Aorta (tissue), 5 donors: ENCODE measurements at regions of chr4 and their contacts with region 1.

Region 1: DNA sequence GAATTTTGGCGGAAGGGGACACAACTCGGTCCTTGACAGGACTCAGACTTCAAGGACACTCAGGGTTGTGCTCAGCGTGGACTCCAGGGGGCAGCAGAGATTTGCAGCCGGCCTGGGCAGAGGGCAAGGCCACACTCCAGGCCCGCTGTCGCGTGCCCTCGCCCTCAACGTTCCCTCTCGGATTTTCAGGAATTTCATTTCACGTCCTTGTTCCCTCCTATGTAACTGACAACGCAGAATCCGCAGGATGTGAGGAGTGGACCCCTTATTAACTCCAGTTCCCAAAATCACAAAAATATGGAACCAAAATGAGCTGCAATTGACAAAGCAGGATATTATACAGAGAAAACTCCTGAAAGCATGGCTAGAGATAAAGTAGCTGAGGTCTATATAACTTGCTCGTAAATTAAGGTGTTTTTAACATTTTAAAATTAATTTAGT is 21.0 kb upstream of the DCTD start:
- DNase-seq: peak; percentile 75 to 89
- ATAC-seq: peak; percentile 95
- H3K4me3 ChIP-seq: no peak overlapping the region
- H3K27ac ChIP-seq: no peak overlapping the region
- H3K4me1 ChIP-seq: no peaks in the 10 kb centered on the region
- H3K27me3 ChIP-seq: no peaks in the 10 kb centered on the region

Region 2: GRCh38 chr4:182738283-182739047 is 199.8 kb before region 1 on chr4:
- intact Hi-C with region 1: no loop called
- DNase-seq: no peak
- ATAC-seq: no peak
- H3K4me3 ChIP-seq: no peak overlapping the region
- H3K27ac ChIP-seq: no peak overlapping the region
- H3K4me1 ChIP-seq: no peaks in the 10 kb centered on the region
- H3K27me3 ChIP-seq: no peaks in the 10 kb centered on the region

Region 3: DNA sequence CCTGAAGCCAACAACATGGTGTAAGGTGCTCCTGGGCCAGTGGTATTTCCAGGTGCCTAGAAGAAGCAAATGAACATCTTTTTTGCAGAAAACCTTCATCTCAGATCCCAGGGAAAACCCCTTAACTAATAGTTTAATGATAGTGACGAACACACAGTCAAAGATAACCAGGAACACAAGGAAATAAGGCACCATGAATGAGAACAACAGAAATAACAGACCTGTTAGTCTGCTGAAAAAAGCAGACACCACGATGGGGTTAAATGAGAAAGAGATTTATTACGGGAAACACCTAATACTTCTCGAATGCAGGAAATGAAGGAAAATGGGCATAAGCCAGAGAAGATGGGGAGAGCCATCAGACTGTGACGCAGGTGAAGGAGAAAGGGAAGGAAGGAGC is 130.3 kb after region 1 on chr4:
- intact Hi-C with region 1: loop called (anchors 2 to 10 kb)
- DNase-seq: no peak
- ATAC-seq: no peak
- H3K4me3 ChIP-seq: no peak overlapping the region
- H3K27ac ChIP-seq: no peak overlapping the region
- H3K4me1 ChIP-seq: no peaks in the 10 kb centered on the region
- H3K27me3 ChIP-seq: no peaks in the 10 kb centered on the region

Region 4: DNA sequence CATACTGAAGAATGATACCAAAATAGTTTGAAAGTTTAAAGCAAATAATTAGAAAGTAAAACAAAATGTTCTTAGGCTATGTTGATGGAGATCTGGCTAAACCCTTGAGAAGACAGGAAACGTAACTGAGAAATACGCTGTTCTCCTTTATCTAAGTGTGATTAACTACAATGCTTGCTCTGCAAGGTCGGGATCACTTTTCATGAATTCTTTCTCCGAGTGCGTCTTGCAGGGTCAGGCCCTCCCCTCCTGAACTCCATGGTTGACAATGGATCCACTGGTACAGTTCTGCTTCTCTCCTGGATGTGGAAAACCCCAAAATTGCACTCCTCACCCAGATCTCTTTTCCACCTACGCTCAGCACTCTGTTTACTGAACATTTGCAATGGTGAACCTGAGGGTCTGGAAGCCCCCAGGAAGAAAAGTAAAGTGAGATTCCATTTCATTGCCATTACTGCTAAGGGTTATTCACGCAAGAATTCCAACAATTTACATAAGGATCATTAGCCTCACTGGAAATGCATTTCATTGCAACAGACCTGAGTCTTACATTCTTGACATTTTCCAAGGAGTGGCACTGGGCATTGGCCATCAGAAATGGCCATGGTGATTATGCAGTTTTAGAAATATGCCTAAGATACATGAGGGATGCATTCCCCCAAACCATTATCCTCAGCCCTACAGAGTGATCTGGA is 136.2 kb after region 1 on chr4:
- intact Hi-C with region 1: loop called (anchors 2 to 10 kb)
- DNase-seq: no peak
- ATAC-seq: no peak
- H3K4me3 ChIP-seq: no peak overlapping the region
- H3K27ac ChIP-seq: no peak overlapping the region
- H3K4me1 ChIP-seq: no peaks in the 10 kb centered on the region
- H3K27me3 ChIP-seq: no peaks in the 10 kb centered on the region

Region 5: DNA sequence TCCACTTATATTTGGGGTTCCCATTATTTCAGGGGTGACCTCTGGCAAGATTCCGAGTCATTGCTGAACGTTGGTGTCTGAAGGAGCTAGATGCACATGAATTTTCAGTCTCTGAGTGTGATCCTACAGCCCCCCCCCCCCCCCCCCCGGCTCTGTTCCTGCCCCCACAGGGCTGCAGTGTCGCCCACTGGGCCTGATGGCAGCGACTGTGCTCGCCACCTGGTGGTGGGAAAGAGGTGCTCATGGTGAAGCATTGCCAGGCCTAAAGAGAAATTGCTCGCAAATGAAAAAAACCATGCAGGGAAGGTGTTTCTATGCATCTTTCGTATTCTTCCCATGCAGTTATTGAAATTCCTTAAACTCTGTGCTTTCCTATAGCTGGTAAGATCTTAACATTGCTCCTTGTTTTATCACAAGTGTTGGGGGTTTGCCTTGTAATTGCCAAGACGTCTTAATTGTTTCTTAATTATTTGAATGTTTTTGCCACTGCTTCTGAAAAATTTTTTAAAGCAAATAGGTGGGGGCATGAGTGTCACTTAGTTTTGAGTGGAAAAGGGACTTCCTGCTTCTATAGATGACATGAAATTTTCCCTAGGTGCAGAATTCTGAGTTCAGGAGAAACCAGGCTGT is 318.6 kb after region 1 on chr4:
- intact Hi-C with region 1: loop called (anchors 2 to 5 kb)
- DNase-seq: peak; percentile 71 to 85
- ATAC-seq: peak; percentile 80
- H3K4me3 ChIP-seq: no peak overlapping the region
- H3K27ac ChIP-seq: no peak overlapping the region
- H3K4me1 ChIP-seq: no peaks in the 10 kb centered on the region
- H3K27me3 ChIP-seq: peaks cover 0 to 1% of the 10 kb centered on the region in 2 donors

Region 6: DNA sequence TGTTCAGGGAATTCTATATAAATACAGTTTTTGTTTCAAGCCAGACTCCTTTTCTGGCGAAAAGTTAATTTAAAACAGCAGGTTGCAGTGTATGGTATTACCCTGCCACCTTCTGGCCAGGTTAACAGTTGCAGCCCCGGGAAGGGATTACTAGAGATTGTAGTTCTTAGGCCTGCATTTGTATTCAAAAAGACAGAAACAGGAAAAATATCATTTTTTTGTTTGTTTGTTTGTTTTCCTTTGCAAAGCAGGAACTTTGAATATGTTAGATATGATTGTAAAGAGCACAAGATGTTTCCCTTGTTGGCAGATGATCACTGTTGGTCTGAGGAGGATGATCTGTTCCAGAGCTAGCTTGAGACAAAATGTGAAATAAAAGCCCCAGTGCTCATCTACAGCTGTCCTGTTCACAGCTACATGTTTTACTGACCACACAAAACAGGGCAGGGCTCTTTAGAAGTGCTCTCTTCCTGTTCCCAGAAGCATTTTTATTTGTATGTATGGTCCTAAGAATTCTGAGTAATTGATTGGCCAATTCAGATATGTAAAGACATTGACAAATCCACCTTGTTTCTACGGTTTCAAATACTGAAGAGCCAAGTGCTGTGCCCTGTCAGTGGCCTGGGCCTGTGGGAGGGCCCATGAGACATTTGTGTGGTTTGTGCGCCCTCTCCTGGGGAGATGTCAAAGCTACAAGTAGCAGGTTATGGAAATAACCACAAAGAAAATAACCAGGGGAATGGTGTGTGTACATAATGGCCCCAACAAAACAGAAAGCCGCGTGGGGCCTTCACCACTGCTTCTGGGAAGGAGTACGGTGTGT is 323.9 kb after region 1 on chr4:
- intact Hi-C with region 1: loop called (anchors 2 to 5 kb)
- DNase-seq: peak; percentile 83 to 88
- ATAC-seq: peak; percentile 93
- H3K4me3 ChIP-seq: no peak overlapping the region
- H3K27ac ChIP-seq: no peak overlapping the region
- H3K4me1 ChIP-seq: no peaks in the 10 kb centered on the region
- H3K27me3 ChIP-seq: no peaks in the 10 kb centered on the region

Region 7: DNA sequence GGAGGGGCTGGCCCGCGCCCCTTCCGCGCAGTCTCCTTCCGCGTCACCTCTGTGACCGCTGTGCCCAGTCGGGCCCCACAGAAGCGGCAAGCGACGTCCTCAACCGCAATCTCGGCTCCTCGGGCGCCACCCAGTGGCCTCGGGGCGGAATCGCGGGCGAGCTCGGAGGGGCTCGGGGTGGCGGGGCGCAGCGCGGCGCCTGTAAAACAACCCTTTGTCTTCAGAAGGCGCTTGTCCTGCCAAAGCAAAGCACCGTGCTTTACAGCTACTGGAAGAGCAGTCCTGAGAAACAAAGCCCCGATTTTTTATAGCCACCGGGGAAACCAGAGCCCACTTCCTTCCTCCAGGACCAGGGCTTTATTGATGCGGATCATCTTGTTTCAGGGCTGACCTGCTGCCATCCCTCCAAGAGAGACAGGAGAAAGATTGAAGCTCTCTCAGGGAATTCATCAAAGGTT is 468.9 kb after region 1 on chr4:
- intact Hi-C with region 1: loop called in 1 of 2 experiments (anchors 10 kb)
- DNase-seq: peak; percentile 88 to 96
- ATAC-seq: peak; percentile 94
- H3K4me3 ChIP-seq: peak overlapping the region in 1 of 2 donors; percentile 38
- H3K27ac ChIP-seq: no peak overlapping the region
- H3K4me1 ChIP-seq: no peaks in the 10 kb centered on the region
- H3K27me3 ChIP-seq: no peaks in the 10 kb centered on the region